Activated naive CD4-positive, alpha-beta T cell treated with anti-CD3 and anti-CD28 coated beads for 36 hours (primary cell): ENCODE measurements at regions of chr3 and their contacts with region 1.

Region 1: GRCh38 chr3:30606301-30607031 is at the start of gene TGFBR2:
- DNase-seq: peak; percentile 90
- H3K4me3 Mint-ChIP-seq: peak within 1 kb of the TSS; percentile 94
- H3K27ac Mint-ChIP-seq: peak within 1 kb of the TSS; percentile 100
- H3K4me1 Mint-ChIP-seq: peaks cover 52% of the 10 kb centered on the region
- H3K27me3 Mint-ChIP-seq: no peaks in the 10 kb centered on the region
- total RNA-seq, gene TGFBR2: 57.8 to 58.1 TPM

Region 2: DNA sequence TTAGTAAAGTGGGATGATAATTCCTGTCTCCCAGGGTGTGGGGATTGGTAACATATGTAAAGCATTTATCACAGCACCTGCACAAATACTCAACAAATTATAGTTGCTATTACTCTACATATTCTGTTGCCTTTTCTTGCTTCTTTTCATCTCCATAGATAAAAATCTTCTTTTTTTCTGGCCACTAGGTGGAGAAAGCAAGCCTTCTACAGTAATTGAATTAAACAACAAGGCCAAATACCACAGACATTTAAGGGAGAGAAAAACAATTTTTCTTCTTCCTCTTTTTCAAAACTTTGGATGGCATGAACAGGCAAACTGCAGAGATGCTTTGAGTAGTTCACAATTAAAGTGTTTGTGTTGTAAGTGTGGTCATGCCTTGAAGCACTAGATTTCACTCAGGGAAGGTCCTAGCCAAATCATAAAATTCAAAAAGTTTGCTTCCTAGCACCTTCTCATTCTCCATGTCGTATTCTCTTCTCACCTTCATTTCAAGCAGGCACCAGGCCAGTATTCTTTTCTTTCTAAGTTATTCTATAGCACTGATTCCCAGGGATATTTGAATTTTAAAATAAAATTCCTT is 493.5 kb before region 1 on chr3:
- CTCF ChIA-PET with region 1: no interaction called
- intact Hi-C with region 1: loop called (anchors 2 kb)
- DNase-seq: no peak
- H3K4me3 Mint-ChIP-seq: no peak overlapping the region
- H3K27ac Mint-ChIP-seq: no peak overlapping the region
- H3K4me1 Mint-ChIP-seq: peaks cover 10% of the 10 kb centered on the region
- H3K27me3 Mint-ChIP-seq: no peaks in the 10 kb centered on the region

Region 3: DNA sequence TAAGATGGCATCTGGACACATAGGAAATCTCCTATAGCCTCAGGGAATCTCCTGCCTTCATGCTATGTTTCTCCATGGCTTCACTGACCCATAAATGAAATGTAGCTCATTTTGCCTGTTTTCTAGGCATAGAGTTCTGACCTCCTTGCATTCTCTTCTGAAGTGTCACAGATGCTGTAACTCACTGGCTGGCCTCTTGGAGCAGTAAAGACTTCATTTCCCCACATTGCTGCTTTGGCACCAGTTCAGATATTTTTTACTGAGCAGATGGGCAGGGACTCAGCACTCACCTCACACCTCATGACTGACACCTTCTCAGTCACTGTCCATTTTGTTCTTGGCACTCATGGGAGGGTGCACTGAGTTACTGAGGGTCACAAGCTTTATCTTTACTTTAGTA is 286.8 kb before region 1 on chr3:
- CTCF ChIA-PET with region 1: interaction called, 5 read pairs
- intact Hi-C with region 1: loop called (anchors 1 kb)
- DNase-seq: peak; percentile 67
- H3K4me3 Mint-ChIP-seq: no peak overlapping the region
- H3K27ac Mint-ChIP-seq: peak overlapping the region; percentile 26
- H3K4me1 Mint-ChIP-seq: peaks cover 21% of the 10 kb centered on the region
- H3K27me3 Mint-ChIP-seq: no peaks in the 10 kb centered on the region

Region 4: GRCh38 chr3:30502742-30503073 is 103.8 kb before region 1 on chr3:
- CTCF ChIA-PET with region 1: no interaction called
- intact Hi-C with region 1: loop called (anchors 2 kb)
- DNase-seq: no peak
- H3K4me3 Mint-ChIP-seq: no peak overlapping the region
- H3K27ac Mint-ChIP-seq: peak overlapping the region; percentile 43
- H3K4me1 Mint-ChIP-seq: peaks cover 30% of the 10 kb centered on the region
- H3K27me3 Mint-ChIP-seq: no peaks in the 10 kb centered on the region

Region 5: DNA sequence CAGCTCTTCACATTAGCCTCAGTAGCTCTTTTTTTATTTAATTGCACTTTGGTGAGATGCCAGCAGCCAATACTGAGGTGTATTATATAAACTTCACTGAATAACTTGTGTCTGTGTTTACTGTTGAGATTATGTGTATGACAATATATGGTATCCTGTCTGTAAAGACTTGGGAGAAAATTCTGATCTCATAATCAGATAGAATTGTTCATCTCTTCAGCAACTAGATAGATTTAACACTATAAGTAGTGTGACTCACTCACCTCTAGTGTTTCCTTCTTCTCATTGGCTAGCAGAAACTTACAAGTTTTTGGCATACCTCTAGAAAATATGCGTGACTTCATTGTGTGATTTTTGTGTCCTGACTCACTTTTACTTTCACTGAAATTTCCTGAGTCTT is 67.7 kb before region 1 on chr3:
- CTCF ChIA-PET with region 1: no interaction called
- intact Hi-C with region 1: loop called (anchors 2 kb)
- DNase-seq: no peak
- H3K4me3 Mint-ChIP-seq: no peak overlapping the region
- H3K27ac Mint-ChIP-seq: no peak overlapping the region
- H3K4me1 Mint-ChIP-seq: peaks cover 19% of the 10 kb centered on the region
- H3K27me3 Mint-ChIP-seq: no peaks in the 10 kb centered on the region

Region 6: GRCh38 chr3:30620402-30621360 is 14.2 kb after region 1 on chr3:
- CTCF ChIA-PET with region 1: interaction called, 5 read pairs
- intact Hi-C with region 1: loop called (anchors 1 kb)
- DNase-seq: peak; percentile 73
- H3K4me3 Mint-ChIP-seq: peak overlapping the region; percentile 58
- H3K27ac Mint-ChIP-seq: peak overlapping the region; percentile 98
- H3K4me1 Mint-ChIP-seq: peaks cover 89% of the 10 kb centered on the region
- H3K27me3 Mint-ChIP-seq: no peaks in the 10 kb centered on the region